Kidney (tissue), 22 donors: ENCODE measurements at regions of chr7 and their contacts with region 1.

Region 1: DNA sequence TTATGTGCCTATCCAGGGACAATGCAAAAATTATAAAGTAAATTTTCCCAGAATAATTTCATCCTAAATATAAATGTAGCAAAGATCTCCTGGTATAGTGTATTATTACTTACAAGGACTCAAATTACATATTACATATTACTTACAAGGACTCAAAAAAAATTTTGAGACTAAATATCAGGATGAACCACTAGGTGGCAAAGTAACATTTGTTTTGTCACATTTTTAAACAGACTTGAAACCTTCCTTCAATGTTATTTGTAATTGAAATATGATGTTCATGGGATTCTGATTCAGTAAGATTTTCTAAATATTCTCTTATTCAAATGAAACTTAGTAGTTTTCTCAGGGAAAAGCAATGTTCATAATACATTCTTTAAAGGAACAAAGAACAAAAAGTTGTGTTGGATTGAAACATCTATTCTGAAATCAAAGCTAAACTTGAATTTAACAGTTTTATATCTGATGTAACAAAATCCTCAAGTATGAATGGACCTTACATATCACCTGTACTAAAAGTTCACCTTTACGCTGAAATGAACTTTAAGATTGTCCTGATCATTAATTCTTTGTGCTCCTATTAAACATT is 74.3 kb upstream of the GNAI1 start:
- DNase-seq: peak in 2 of 5 donors; percentile 69 to 80
- H3K4me3 ChIP-seq: no peak overlapping the region
- H3K27ac ChIP-seq: no peak overlapping the region
- H3K4me1 ChIP-seq: no peaks in the 10 kb centered on the region
- H3K27me3 ChIP-seq: no peaks in the 10 kb centered on the region
- CTCF ChIP-seq: peak; percentile 61

Region 2: DNA sequence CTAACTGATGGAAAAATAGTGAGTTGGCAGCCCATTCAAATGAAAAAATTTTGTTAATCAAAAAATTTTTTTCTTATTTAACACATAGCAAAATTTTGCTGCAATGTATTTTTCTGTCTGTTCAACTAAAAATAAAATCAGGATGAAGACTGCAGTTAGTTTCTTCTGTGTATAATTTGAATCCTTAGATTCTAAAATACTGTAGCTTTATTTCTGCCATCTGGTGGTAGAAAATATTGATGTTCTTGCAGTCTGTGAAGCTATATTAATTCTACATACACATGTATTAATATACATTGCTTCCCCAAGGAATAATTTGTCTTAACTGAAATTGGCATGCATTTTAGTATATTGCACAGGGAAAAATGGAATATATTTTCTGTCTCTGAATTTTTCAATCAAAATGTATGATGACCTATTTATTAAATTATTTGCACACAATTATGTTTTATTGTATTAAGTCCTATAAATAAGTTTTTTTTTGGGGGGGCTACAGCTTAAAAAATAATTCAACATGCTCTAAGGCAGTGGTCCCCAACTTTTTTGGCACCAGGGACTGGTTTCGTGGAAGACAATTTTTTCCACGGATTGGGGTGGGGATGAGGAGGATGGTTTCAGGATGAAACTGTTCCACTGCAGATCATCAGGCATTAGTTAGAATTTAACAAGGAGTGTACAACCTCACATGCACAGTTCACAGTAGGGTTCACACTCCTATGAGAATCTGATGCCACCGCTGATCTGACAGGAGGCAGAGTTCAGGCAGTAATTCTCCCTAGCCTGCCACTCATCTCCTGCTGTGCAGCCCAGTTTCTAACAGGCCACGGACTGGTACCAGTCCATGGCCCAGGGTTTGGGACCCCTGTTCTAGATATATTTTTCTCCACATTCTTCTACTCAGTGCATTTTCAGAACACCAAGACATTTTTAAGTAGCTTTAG is 332.2 kb after region 1 on chr7:
- intact Hi-C with region 1: loop called (anchors 10 kb)
- DNase-seq: peak in 2 of 5 donors; percentile 38 to 57
- H3K4me3 ChIP-seq: no peak overlapping the region
- H3K27ac ChIP-seq: no peak overlapping the region
- H3K4me1 ChIP-seq: no peaks in the 10 kb centered on the region
- H3K27me3 ChIP-seq: no peaks in the 10 kb centered on the region
- CTCF ChIP-seq: peak; percentile 32